T-cell (primary cell): ENCODE measurements at regions of chr20 and their contacts with region 1.

Region 1: GRCh38 chr20:50870561-50871161 is 60.6 kb downstream of the ADNP start:
- DNase-seq: no peak
- ATAC-seq: no peak
- H3K4me3 ChIP-seq: no peak overlapping the region
- H3K4me3 Mint-ChIP-seq: no peak overlapping the region
- H3K27ac ChIP-seq: no peak overlapping the region
- H3K27ac Mint-ChIP-seq: no peak overlapping the region
- H3K4me1 ChIP-seq: no peaks in the 10 kb centered on the region
- H3K4me1 Mint-ChIP-seq: no peaks in the 10 kb centered on the region
- H3K27me3 ChIP-seq: no peaks in the 10 kb centered on the region
- H3K27me3 Mint-ChIP-seq: no peaks in the 10 kb centered on the region

Region 2: DNA sequence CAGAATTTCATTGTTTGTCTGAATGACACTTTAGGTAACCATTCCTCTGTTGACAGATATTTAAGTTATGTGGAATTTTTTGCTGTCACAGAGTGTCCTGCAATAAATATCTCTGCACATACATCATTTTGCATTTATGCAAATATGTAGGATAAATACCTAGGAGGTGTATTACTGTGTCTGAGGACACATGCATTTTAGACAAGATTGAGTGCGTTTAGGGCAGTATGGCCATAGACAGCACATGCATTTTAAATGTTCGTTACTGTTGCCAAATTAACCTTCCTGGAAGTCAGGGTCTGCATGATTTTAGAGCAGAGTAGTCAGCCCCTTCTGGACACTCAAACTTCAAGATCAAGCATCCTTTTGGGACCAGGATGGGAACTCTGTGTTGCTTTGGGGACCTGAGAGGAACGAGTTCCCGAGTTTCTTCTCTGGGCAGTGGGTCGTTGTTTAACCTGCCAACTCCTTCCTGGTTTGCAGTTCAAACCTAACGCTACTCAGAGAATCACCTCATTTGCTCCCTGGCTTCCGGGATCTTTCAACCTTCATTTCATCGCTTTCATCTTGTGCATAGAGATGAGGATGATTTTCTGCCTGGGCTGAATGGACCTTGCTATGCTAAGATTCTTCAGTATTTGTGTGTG is 66.1 kb before region 1 on chr20:
- CTCF ChIA-PET with region 1: no interaction called
- POLR2A ChIA-PET with region 1: no interaction called
- DNase-seq: peak in 21 of 35 experiments; percentile 5 to 71 (median 25)
- ATAC-seq: peak; percentile 85 to 97 (median 94)
- H3K4me3 ChIP-seq: no peak overlapping the region
- H3K4me3 Mint-ChIP-seq: peak overlapping the region; percentile 4 to 64 (median 52)
- H3K27ac ChIP-seq: peak overlapping the region; percentile 62
- H3K27ac Mint-ChIP-seq: peak overlapping the region; percentile 87 to 95
- H3K4me1 ChIP-seq: peaks cover 7 to 21% of the 10 kb centered on the region in 2 experiments
- H3K4me1 Mint-ChIP-seq: peaks cover 23 to 39% (median 38%) of the 10 kb centered on the region in 3 donors
- H3K27me3 ChIP-seq: no peaks in the 10 kb centered on the region
- H3K27me3 Mint-ChIP-seq: no peaks in the 10 kb centered on the region

Region 3: DNA sequence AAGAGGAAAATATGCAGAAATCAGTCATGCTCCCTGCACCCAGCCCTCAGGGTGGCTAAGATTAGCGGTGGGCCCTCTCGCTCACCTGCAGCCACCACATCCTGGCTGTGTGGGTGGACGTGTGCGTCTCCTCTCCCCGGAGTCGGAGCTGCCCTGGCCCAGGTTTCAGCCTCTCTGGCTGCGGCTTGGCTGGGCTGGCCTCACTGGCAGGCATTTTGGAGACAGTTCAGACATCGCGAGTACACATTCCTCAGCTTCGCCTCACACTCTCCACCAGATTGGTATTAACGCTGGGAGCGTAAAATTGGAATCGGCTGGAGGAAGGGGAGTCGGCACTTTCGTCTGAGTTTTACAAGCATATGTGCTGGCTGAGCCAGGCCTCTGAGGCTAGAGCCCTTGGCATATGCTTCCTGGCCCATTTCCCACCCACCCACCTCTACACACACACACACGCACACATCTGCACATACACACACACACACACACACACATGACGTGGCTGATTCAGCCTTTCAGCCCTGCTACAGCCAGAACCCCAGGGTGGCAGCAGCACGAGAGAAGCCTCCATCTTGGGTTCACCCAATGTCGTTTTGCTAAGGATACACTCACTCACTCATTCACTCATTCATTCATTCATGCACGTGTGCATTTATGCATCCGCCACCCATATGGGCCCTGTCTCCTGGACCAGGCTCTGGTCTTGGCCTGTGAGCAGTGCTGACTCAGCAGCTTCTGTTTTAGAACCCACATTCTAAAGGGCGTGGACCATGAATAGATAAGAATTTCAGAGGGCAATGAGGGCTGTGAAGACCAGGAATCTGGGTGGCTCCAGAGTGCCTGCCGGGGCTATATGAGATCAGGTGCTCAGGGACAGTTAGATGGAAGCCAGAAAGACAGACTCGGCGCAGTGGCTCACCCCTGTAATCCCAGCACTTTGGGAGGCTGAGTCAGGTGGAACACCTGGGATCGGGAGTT is 32.8 kb before region 1 on chr20:
- CTCF ChIA-PET with region 1: no interaction called
- POLR2A ChIA-PET with region 1: interaction called in 1 of 2 experiments, 11 read pairs
- DNase-seq: no peak
- ATAC-seq: peak in 1 of 4 experiments; percentile 17
- H3K4me3 ChIP-seq: no peak overlapping the region
- H3K4me3 Mint-ChIP-seq: no peak overlapping the region
- H3K27ac ChIP-seq: no peak overlapping the region
- H3K27ac Mint-ChIP-seq: peak overlapping the region in 1 of 2 donors; percentile 48
- H3K4me1 ChIP-seq: peaks cover 0 to 4% of the 10 kb centered on the region in 2 experiments
- H3K4me1 Mint-ChIP-seq: peaks cover 0 to 3% (median 2%) of the 10 kb centered on the region in 3 donors
- H3K27me3 ChIP-seq: no peaks in the 10 kb centered on the region
- H3K27me3 Mint-ChIP-seq: no peaks in the 10 kb centered on the region